Lower lobe of right lung (tissue), 2 donors: ENCODE measurements at regions of chr6 and their contacts with region 1.

Region 1: DNA sequence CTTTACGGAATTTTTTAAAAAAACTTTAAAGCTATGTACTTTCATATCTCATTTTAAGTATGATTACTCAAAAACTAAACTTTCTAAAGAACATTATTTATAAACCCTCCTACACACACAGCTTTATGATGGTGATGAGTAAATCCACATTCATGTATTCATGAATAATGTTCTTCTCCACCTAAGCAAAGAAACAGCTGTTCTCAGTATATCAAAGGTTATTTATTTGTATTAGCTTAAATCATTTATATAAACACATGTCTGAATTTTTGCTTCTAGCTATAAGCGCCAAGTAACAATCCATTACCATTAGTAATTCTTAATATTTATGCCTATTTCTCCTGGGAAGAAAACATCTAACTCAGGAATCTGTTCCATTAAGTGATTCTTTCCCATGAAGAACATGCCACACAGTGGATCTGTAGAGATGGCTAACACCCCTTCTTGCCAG is 63.3 kb downstream of the SMLR1 start:
- DNase-seq: no peak
- ATAC-seq: no peak
- H3K4me3 ChIP-seq: no peak overlapping the region
- H3K27ac ChIP-seq: no peak overlapping the region
- H3K4me1 ChIP-seq: no peaks in the 10 kb centered on the region
- H3K27me3 ChIP-seq: no peaks in the 10 kb centered on the region
- CTCF ChIP-seq: no peak

Region 2: DNA sequence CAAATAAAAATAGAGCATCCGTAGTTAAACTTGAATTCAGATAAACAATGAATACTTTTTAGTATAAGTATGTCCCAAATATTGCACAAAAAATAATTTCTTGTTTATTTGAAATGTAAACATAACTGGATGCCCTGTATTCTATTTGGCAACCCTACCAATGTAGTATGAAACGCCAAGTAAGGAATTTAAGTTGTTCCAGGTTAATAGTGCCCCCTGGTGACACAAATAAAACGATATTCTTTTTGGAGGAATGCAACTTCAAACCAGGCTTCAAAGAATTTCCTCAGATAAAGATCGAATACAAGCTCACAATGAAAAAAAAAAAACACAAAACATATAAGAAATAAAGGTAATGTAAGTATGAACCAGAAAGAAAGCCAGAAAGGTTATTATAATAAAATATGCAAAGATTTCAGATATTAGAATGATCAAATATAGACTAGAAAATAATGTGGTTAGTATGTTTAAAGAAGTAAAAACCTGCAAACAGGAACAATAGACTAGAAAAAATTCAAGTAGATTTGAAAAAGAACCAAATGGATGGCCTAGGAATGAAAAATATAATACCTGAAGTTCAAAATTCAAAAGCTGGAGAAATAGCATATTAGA is 226.3 kb after region 1 on chr6:
- intact Hi-C with region 1: loop called (anchors 5 kb)
- DNase-seq: no peak
- ATAC-seq: peak; percentile 62 to 73
- H3K4me3 ChIP-seq: no peak overlapping the region
- H3K27ac ChIP-seq: no peak overlapping the region
- H3K4me1 ChIP-seq: no peaks in the 10 kb centered on the region
- H3K27me3 ChIP-seq: no peaks in the 10 kb centered on the region
- CTCF ChIP-seq: peak; percentile 50

Region 3: DNA sequence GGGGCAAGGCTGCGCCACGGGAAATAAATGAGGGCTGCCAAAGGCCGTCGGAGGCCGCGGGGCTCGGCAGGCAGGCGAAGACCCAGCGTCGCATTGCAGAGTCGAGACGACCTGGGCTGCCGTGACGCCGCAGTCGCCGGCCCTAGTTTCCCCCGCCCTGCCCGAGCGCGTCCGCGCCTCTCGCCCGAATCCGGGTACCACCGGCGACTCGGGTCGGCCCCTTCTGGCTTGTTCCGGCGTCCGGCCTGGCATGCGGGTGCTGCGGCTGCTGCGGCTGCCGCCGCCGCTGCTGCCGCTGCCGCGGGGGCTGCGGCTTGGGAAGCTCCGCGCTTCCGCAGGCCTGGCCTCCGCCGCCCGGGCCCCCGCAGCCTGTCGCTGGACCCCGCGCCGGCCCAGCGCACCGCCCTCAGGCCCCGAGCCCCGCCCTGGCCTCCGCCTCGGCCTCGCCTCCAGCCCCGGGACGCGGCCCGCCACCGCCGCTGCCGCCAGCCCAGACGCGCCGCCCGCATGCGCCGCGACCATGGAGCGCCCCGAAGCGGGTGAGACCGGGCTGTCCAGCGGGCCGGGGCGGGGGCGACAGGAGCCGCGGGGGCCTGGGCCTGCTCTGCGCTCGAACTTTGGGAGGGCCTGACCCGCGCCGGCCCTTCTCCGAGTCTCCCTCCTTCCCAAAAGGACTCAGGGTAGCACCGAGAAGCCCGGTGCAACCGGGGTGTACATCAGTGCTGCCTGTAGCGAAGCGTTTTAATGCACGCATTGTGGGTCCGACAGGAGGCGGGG is 244.9 kb after region 1 on chr6 and contains the start of gene AKAP7:
- intact Hi-C with region 1: no loop called
- DNase-seq: peak; percentile 89
- ATAC-seq: peak; percentile 92 to 96
- H3K4me3 ChIP-seq: peak within 1 kb of the TSS; percentile 81
- H3K27ac ChIP-seq: peak within 1 kb of the TSS; percentile 92
- H3K4me1 ChIP-seq: peaks cover 20% of the 10 kb centered on the region
- H3K27me3 ChIP-seq: no peaks in the 10 kb centered on the region
- CTCF ChIP-seq: no peak
- total RNA-seq, gene AKAP7: 11.0 TPM